Left cardiac atrium (tissue), 4 donors: ENCODE measurements at regions of chr5 and their contacts with region 1.

Region 1: DNA sequence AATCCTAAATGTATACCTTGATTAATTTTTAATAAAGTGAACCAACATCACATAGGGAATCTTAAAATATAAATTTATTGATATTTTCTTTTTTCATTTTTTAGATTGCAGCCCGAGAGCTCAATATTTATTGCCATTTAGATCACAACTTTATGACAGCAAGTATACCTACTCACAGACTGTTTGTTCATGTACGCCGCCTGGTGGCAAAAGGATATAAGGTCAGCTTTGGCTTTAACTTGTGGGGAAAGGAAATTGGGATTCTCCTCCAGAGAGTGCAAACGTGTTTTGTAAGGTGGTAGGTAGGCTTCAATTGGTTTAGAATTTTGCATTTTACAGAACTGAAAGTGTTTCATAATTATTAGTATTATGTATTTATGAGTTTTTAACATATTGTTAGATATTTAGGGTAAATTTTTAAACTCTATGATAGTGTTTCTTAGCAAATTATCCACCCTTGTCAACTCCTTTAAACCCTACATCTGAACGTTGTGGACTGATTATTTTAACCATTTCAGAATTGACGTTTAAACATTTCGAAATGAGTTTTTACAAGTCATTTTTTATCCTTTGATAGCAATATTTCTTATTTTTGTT is 17.5 kb upstream of the DHFR start:
- DNase-seq: peak; percentile 72
- ATAC-seq: peak; percentile 32 to 80

Region 2: GRCh38 chr5:80487829-80488721 is 184.2 kb before region 1 on chr5 and contains the start of gene FAM151B:
- intact Hi-C with region 1: loop called (anchors 10 kb)
- DNase-seq: peak; percentile 85
- ATAC-seq: peak; percentile 95 to 97
- total RNA-seq, gene FAM151B: 2.5 to 2.9 TPM

Region 3: GRCh38 chr5:81081461-81081835 is 409.2 kb after region 1 on chr5:
- intact Hi-C with region 1: no loop called
- DNase-seq: no peak
- ATAC-seq: no peak